Right ventricle myocardium inferior (tissue), 1 donor: ENCODE measurements at regions of chr13 and their contacts with region 1.

Region 1: DNA sequence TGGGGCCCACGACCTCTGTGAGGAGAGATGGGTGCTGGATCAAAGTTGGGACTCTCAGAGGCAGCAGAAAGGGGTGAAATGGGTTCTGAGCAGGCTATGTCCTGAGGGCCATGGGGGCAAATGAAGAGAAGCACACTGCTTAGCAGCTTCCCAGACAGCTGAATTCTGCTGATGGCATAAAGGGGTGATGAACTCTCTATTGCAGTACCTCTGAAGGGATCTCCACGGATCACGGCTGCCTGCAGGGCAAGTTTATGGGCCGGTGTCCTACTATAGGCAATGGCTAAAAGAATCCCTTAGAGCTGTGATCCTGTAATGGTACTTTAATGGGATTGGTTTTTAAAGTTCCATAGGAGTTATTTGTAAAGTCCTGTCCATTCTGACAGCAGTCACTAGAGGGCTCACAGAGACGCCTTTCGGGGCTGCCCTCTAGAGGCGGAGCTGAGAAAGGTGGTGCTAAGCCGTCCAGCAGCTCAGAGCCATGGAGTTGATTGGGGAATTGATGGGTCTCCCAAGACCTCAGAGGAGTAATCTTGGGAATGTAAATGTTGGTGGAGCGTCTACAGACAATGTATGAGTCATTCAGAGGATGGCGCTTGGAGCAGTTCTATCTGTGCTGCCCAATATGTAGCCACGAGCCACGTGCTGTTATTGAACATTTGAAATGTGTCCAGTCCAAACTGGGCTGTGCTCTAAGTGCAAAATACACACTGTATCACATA is 287.3 kb downstream of the COG6 start:
- DNase-seq: peak; percentile 81
- ATAC-seq: peak; percentile 93

Region 2: GRCh38 chr13:39684531-39685137 is 258.1 kb before region 1 on chr13:
- intact Hi-C with region 1: loop called (anchors 5 kb)
- DNase-seq: no peak
- ATAC-seq: no peak

Region 3: GRCh38 chr13:39777527-39778061 is 165.1 kb before region 1 on chr13:
- intact Hi-C with region 1: loop called (anchors 10 kb)
- DNase-seq: no peak
- ATAC-seq: no peak

Region 4: DNA sequence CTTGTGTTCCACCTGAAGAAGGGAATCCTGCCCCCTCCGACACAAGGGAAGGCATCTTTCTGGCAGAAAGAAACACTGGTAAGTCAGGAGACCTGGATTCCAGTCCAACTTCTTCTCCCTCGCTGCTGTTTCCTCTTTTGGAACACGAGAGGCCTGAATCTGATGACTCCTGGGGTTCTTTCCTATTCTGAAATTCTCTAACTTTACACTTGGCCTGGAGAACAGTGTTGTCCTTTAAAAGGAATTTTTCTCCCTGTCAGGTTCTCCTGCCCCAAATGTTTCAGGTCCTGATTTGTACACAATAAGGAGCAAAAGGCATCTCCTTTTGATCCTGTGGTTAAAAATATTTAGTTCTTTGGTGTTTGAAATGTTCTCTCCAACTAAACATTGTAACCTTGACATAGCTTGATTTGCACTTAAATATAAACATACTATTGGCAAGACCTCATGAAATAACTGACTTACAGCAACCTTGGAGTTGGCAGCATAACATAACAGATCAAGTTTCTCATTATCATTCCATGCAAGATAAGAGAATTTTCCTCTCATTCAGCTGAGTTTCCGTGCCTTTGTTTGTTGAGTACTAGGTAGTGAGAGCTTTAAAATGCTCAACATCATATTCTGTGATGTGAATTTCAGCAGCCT is 42.5 kb before region 1 on chr13:
- intact Hi-C with region 1: no loop called
- DNase-seq: no peak
- ATAC-seq: peak; percentile 31

Region 5: GRCh38 chr13:40206241-40207000 is 263.7 kb after region 1 on chr13:
- intact Hi-C with region 1: no loop called
- DNase-seq: no peak
- ATAC-seq: no peak